Endothelial cell of umbilical vein (primary cell): ENCODE measurements at regions of chr1 and their contacts with region 1.

Region 1: DNA sequence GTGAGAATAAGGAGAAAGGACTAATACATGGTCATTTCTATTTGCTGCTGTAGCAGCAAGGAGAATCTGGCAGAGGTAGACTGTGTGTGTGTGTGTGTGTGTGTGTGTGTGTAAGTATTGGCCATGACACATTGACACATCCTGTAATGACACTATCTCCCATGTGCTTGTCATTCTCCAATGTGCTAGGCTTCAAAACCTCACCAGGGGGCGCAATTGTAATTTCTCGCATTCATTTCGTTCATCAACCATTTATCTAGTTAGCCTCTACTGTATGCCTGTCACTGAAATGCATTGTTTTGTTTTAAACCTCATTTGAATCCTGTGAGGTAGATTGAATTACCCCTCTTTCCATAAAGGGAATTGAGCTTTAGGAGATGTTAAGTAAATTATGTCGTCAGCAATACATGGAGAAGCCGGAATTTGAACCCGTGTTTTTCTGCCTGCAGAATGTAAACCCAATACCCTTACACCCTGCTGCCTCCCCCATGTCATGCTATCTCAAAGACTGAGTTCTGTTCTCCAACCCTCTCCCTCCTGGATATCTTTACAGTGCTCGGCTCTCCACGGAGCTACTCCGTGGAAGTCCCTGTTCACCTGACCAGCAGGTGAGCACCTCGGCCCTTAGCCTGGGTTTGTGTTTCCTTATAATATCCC is 100.8 kb downstream of the UCK2 start:
- DNase-seq: peak; percentile 43
- H3K4me3 ChIP-seq: no peak overlapping the region
- H3K27ac ChIP-seq: no peak overlapping the region
- H3K4me1 ChIP-seq: no peaks in the 10 kb centered on the region
- H3K27me3 ChIP-seq: no peaks in the 10 kb centered on the region
- CTCF ChIP-seq: peak; percentile 71 to 73
- POLR2A ChIP-seq: no peak

Region 2: GRCh38 chr1:165871311-165872067 is 56.7 kb before region 1 on chr1:
- CTCF ChIA-PET with region 1: no interaction called
- POLR2A ChIA-PET with region 1: no interaction called
- dilution Hi-C with region 1: no loop called
- intact Hi-C with region 1: no loop called
- DNase-seq: peak; percentile 54
- H3K4me3 ChIP-seq: no peak overlapping the region
- H3K27ac ChIP-seq: peak overlapping the region; percentile 21
- H3K4me1 ChIP-seq: peaks cover 10% of the 10 kb centered on the region
- H3K27me3 ChIP-seq: no peaks in the 10 kb centered on the region
- CTCF ChIP-seq: peak; percentile 44 to 45
- POLR2A ChIP-seq: no peak

Region 3: DNA sequence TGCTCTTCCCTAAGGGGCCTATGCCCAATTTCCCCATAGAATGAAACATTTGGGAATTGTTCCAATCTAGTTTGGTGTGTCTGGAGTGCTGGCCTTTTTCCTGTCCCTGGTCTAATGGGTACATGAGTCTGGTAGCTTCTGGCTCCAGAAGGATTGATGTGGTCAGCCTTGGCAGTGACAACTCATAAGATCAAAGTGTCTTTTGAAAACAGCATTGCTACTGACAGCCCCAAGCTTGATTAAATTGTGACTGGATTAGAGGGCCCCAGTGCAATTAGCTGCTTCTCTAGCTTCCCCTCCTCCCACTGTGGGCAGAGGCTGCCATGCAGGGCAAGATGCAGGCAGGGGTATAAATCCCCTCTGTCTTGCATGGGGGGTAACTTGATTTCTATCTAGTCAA is 30.1 kb after region 1 on chr1:
- CTCF ChIA-PET with region 1: no interaction called
- POLR2A ChIA-PET with region 1: no interaction called
- dilution Hi-C with region 1: no loop called
- intact Hi-C with region 1: no loop called
- DNase-seq: no peak
- H3K4me3 ChIP-seq: no peak overlapping the region
- H3K27ac ChIP-seq: no peak overlapping the region
- H3K4me1 ChIP-seq: no peaks in the 10 kb centered on the region
- H3K27me3 ChIP-seq: no peaks in the 10 kb centered on the region
- CTCF ChIP-seq: no peak
- POLR2A ChIP-seq: no peak

Region 4: DNA sequence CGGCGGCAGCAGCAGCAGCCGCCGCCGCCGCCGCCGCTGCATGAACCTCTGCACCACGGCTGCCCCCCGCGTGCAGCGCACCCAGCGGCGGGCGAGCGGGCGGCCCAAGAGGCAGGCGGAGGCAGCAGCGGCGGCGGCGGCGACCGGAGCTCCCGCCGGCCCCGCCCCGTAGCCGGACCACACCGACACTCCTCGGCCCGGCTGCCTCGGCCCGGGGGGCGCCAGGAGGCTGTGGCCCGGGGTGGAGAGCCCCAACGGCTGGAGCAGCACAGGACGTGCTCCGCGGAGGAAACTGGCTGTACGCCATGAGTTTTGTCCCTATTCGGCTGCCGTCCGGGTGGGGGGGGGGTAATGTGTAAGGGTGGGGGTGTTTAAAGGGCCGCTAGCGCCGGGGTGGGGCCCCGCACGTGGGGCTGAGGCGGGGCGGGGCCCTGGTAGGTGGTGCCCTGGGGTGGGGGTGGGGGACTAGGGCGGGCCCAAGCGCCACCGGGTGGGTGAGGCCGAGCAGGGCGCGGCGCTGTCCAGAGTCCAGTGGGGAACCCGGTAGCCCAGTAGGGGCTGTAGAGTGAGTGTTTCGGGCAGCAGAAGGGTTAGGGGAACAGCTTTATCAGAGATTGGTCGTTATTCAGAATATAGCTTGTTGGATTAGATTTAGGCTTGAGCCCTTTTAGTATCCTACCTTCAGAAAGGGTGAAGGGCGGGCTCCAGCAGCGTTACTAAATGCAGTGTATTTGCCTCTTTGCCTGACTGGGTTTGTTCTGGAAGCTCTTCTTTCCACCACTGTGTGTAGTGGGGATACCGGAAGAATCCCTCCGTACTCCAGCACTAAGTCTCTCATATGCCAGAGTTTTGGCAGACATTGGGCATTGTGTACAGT is 238.7 kb after region 1 on chr1 and contains the start of gene FAM78B:
- CTCF ChIA-PET with region 1: interaction called, 10 read pairs
- POLR2A ChIA-PET with region 1: no interaction called
- dilution Hi-C with region 1: no loop called
- intact Hi-C with region 1: loop called (anchors 1 kb)
- DNase-seq: peak; percentile 31
- H3K4me3 ChIP-seq: peak within 1 kb of the TSS in 1 of 3 experiments; percentile 53
- H3K27ac ChIP-seq: no peak within 1 kb of the TSS
- H3K4me1 ChIP-seq: peaks cover 6% of the 10 kb centered on the region
- H3K27me3 ChIP-seq: peaks cover 17 to 21% of the 10 kb centered on the region in 2 experiments
- CTCF ChIP-seq: no peak
- POLR2A ChIP-seq: no peak
- total RNA-seq, gene FAM78B: not detected in 2 replicates

Region 5: GRCh38 chr1:166479052-166479631 is 550.9 kb after region 1 on chr1:
- CTCF ChIA-PET with region 1: interaction called, 126 read pairs
- POLR2A ChIA-PET with region 1: no interaction called
- dilution Hi-C with region 1: no loop called
- intact Hi-C with region 1: loop called (anchors 1 kb)
- DNase-seq: peak; percentile 53
- H3K4me3 ChIP-seq: no peak overlapping the region
- H3K27ac ChIP-seq: no peak overlapping the region
- H3K4me1 ChIP-seq: no peaks in the 10 kb centered on the region
- H3K27me3 ChIP-seq: no peaks in the 10 kb centered on the region
- CTCF ChIP-seq: peak; percentile 53 to 59
- POLR2A ChIP-seq: no peak

Region 6: GRCh38 chr1:166838766-166839599 is 910.8 kb after region 1 on chr1 and contains the start of gene POGK:
- CTCF ChIA-PET with region 1: no interaction called
- POLR2A ChIA-PET with region 1: no interaction called
- dilution Hi-C with region 1: no loop called
- intact Hi-C with region 1: loop called (anchors 10 kb)
- DNase-seq: peak; percentile 90
- H3K4me3 ChIP-seq: peak within 1 kb of the TSS; percentile 35 to 63 (median 54)
- H3K27ac ChIP-seq: peak within 1 kb of the TSS; percentile 14
- H3K4me1 ChIP-seq: peaks cover 18% of the 10 kb centered on the region
- H3K27me3 ChIP-seq: no peaks in the 10 kb centered on the region
- CTCF ChIP-seq: no peak
- POLR2A ChIP-seq: peak; percentile 81
- total RNA-seq, gene POGK: 31.8 and 32.2 TPM in 2 replicates

Region 7: DNA sequence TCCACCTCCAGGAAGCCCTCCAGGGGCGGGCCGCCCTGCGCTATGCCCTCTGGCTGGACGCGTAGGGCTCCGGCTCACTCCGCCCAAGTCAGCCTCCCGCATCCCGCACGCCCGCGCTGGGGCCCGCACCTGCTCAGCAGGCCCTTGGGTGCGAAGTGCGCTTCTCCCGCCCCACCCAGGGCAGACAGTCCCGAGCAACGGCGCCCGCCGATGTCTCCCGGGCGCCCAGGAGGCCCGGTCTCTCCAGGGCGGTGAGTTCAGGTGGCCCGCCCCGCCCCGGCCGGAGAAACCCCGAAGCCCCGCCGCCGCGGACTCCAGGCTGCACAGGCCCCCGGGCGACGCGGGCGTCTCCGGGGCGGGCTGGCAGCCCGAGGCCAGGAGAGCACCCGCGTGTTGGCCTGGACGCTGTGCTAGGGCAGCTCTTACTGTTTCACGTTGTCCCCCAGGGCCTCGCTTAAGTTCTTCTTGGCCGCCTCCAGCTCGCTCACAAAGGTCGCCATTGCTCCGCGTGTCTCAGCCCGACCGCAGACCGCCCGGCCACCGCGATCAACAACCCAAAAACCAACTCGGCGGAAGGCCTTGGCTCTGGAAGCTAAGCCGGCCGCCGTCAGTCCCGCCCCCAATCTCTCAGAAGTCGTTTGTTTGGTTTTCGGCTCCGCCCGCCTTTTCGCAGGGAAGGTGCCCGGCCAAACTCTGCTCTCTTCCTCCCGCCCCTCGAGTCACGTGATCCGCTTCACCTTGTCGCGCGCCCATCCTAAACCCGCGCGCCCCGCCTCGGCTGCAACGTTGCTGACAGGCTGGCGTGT is 947.7 kb after region 1 on chr1 and contains the start of gene TADA1:
- CTCF ChIA-PET with region 1: no interaction called
- POLR2A ChIA-PET with region 1: no interaction called
- dilution Hi-C with region 1: no loop called
- intact Hi-C with region 1: loop called (anchors 10 kb)
- DNase-seq: peak; percentile 98
- H3K4me3 ChIP-seq: peak within 1 kb of the TSS; percentile 2 to 63 (median 53)
- H3K27ac ChIP-seq: peak within 1 kb of the TSS; percentile 47
- H3K4me1 ChIP-seq: peaks cover 10% of the 10 kb centered on the region
- H3K27me3 ChIP-seq: no peaks in the 10 kb centered on the region
- CTCF ChIP-seq: peak in 1 of 2 donors; percentile 22
- POLR2A ChIP-seq: peak; percentile 72
- total RNA-seq, gene TADA1: 7.0 and 7.5 TPM in 2 replicates

Region 8: DNA sequence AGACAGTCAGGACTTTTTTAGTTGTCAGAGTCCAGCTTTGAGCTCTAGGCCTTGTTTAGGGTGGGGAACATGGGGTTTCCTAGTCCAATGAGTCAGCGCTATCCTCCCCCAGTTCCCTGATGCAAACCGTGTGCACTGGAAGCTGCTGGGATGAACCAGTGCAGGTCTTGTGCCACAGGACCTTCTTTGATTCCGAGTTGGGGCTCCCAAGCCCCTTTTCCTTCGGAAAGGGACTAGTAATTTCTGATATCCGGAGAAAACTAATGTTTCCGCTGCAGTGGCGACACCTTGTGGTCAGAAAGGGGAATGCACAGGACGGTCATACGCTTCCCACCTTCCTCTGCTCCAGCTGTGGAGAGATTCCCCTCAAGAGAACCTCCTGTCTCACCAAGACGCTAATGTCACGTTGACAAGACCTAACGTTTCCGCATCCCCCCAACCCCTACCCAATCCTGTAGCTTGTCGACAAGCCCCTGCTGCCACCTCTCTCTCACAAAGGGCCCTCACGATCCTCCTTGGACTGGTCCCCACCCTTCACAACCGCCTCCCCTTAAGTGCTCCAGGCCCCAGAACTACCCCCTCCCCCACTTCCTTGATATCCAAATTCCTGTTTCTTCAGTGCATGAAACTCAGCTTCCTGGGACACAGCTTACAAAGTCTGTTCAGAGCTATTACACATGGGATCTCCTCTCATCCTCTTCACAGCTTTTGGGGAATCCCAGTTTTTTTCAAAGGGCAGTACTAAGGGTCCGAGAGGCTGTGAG is 1131.0 kb after region 1 on chr1:
- CTCF ChIA-PET with region 1: interaction called, 21 read pairs
- POLR2A ChIA-PET with region 1: no interaction called
- dilution Hi-C with region 1: no loop called
- intact Hi-C with region 1: loop called (anchors 1 kb)
- DNase-seq: peak; percentile 54
- H3K4me3 ChIP-seq: no peak overlapping the region
- H3K27ac ChIP-seq: no peak overlapping the region
- H3K4me1 ChIP-seq: peaks cover 3% of the 10 kb centered on the region
- H3K27me3 ChIP-seq: peaks cover 0 to 1% of the 10 kb centered on the region in 2 experiments
- CTCF ChIP-seq: peak; percentile 93 to 96
- POLR2A ChIP-seq: no peak